Activated B cell treated with CpG ODN at 0.5 μM for 24 hours (primary cell): ENCODE measurements at regions of chr21 and their contacts with region 1.

Region 1: DNA sequence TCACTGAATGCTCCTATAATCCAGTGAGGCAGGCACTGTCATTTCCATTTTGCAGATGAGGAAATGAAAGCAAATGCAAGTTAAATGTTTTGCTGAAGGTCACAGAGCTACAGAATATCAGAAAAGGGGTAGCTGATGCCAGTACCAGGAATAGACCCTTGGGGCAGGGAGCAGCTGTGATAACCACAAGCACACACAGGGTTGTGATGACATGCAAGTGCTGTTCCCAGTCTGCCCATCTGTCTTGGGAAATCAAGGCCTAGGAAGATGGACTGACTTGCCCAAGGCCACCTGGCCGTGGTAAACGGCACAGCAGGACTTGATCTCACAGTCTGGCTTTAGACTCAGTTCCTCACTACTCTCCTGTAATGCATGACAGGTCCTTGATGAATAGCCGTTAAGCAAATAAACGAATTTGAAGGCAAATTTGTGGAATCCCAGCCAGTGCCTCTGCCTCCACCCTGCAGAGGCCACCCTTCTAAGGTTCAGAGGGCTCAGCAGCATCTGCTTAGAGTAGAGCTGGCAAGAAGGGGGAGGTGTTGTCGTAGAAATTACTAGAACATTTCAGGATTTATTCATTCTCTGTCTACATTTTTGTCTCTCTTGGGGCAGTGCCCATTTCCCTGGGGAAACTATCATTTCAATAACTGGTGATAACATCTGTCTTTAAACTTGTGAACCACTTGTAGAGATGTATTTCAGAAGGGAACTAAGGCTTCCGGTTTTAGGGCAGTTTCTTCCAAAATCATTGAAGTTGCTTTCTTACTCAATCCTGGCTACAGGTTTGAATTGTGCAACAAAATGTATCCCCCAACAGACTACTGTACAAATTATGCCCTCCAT is 53.2 kb upstream of the MRPS6 start:
- DNase-seq: peak; percentile 45
- ATAC-seq: peak; percentile 69
- H3K4me3 Mint-ChIP-seq: peak overlapping the region; percentile 75
- H3K27ac Mint-ChIP-seq: peak overlapping the region; percentile 96
- H3K4me1 Mint-ChIP-seq: no peaks in the 10 kb centered on the region
- H3K27me3 Mint-ChIP-seq: no peaks in the 10 kb centered on the region
- CTCF ChIP-seq: no peak

Region 2: GRCh38 chr21:33901412-33902288 is 118.6 kb before region 1 on chr21:
- CTCF ChIA-PET with region 1: no interaction called
- POLR2A ChIA-PET with region 1: no interaction called
- intact Hi-C with region 1: no loop called
- DNase-seq: no peak
- ATAC-seq: peak; percentile 14
- H3K4me3 Mint-ChIP-seq: no peak overlapping the region
- H3K27ac Mint-ChIP-seq: no peak overlapping the region
- H3K4me1 Mint-ChIP-seq: peaks cover 4% of the 10 kb centered on the region
- H3K27me3 Mint-ChIP-seq: no peaks in the 10 kb centered on the region
- CTCF ChIP-seq: no peak

Region 3: DNA sequence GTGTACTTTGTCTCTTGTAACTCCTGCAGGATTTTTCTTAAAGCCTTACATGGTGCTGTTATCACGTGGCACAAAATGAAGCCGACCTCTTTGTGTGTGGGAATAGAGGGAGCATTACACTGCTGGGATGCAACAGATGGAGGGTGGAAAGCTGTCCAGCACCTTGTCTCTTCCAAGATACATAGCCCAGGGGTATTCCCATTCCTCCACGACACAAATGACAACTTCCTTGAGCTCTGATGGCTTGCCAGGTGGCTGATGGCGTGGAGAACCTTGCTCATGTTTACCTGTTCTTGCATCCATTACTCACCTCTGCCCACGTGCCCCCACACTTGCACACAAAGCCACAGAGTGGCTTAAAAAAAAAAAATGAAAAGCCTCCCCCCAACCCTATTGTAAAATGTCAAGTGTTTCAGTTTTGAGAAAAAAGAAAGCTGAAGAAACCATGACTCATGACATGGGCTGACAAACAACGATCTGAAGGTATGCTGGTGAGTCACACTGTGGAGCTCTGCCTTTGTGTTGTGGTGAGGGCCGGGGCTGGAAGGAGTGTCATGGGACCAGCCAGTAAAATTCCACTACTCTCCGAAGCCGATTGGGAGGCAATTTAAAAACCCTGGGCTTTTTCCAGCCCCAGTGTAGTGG is 72.7 kb before region 1 on chr21:
- CTCF ChIA-PET with region 1: no interaction called
- POLR2A ChIA-PET with region 1: interaction called, 17 read pairs
- intact Hi-C with region 1: loop called (anchors 1 kb)
- DNase-seq: peak; percentile 36
- ATAC-seq: peak; percentile 74
- H3K4me3 Mint-ChIP-seq: peak overlapping the region; percentile 75
- H3K27ac Mint-ChIP-seq: peak overlapping the region; percentile 92
- H3K4me1 Mint-ChIP-seq: peaks cover 55% of the 10 kb centered on the region
- H3K27me3 Mint-ChIP-seq: no peaks in the 10 kb centered on the region
- CTCF ChIP-seq: no peak

Region 4: GRCh38 chr21:33976082-33977016 is 43.9 kb before region 1 on chr21:
- CTCF ChIA-PET with region 1: interaction called, 4 read pairs
- POLR2A ChIA-PET with region 1: interaction called, 6 read pairs
- intact Hi-C with region 1: loop called (anchors 2 kb)
- DNase-seq: no peak
- ATAC-seq: peak; percentile 49
- H3K4me3 Mint-ChIP-seq: peak overlapping the region; percentile 66
- H3K27ac Mint-ChIP-seq: peak overlapping the region; percentile 90
- H3K4me1 Mint-ChIP-seq: peaks cover 36% of the 10 kb centered on the region
- H3K27me3 Mint-ChIP-seq: no peaks in the 10 kb centered on the region
- CTCF ChIP-seq: no peak

Region 5: DNA sequence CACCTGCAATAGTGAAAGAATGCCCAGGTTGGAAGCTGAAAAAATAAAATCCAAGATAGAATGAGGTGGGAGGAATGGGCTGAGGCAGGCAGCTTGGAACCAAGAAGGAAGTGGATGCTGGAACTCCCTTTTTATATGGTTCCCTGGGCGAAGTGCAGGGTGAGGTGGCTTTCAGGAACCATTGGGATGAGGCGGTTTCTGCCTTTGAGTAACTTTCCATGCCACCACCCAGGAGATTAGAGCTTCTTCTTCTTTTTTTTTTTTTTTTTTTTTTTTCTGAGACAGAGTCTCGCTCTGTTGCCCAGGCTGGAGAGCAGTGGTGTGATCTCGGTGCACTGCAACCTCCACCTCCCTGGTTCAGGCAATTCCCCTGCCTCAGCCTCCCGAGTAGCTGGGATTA is 35.4 kb after region 1 on chr21:
- CTCF ChIA-PET with region 1: interaction called, 3 read pairs
- POLR2A ChIA-PET with region 1: interaction called, 3 read pairs
- intact Hi-C with region 1: loop called (anchors 5 kb)
- DNase-seq: no peak
- ATAC-seq: peak; percentile 45
- H3K4me3 Mint-ChIP-seq: no peak overlapping the region
- H3K27ac Mint-ChIP-seq: no peak overlapping the region
- H3K4me1 Mint-ChIP-seq: peaks cover 8% of the 10 kb centered on the region
- H3K27me3 Mint-ChIP-seq: no peaks in the 10 kb centered on the region
- CTCF ChIP-seq: no peak

Region 6: DNA sequence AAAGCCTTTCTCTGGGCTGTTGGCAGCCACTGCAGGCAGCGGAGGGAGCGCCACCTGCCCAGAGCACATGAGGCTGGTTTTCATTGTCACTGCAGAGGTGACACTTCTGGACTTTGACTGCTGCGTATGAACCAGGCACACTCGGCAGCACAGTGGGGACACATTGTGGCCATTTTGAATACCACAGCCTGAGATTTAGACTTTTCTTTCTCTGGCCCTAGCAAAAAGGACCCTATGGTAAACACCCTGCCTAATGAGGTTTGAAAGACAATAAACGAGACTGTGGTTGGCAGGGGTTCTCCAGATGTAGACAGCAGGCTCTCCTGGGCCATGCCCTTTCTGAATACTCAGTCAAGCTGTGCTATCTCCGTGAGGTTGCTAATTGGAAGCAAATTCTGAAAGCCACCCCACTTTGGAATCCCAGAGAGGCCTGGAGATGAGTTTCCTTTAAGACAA is 331.6 kb after region 1 on chr21:
- CTCF ChIA-PET with region 1: interaction called, 16 read pairs
- POLR2A ChIA-PET with region 1: no interaction called
- intact Hi-C with region 1: loop called (anchors 2 kb)
- DNase-seq: no peak
- ATAC-seq: peak; percentile 80
- H3K4me3 Mint-ChIP-seq: no peak overlapping the region
- H3K27ac Mint-ChIP-seq: no peak overlapping the region
- H3K4me1 Mint-ChIP-seq: peaks cover 3% of the 10 kb centered on the region
- H3K27me3 Mint-ChIP-seq: peaks cover 29% of the 10 kb centered on the region
- CTCF ChIP-seq: no peak

Region 7: DNA sequence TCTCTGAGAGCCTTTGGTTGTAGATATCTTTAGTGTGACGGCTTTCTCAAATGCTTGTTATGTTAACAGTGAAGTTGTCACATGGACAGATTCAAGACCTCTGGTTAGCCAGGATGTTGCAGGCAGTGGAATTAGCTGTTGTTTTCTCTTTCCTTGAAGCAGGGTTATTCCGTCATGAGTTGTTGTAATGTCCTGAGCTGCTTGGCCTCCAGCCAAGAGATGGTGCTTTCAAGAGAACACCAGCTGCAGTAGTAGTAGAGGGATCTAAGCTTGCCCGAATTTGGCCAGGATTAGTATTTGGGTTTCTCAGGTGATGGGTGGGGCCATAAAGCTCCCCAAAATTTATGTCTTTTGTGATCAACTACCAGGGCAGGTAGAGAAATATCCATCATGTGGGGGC is 478.4 kb after region 1 on chr21:
- CTCF ChIA-PET with region 1: no interaction called
- POLR2A ChIA-PET with region 1: no interaction called
- intact Hi-C with region 1: no loop called
- DNase-seq: no peak
- ATAC-seq: no peak
- H3K4me3 Mint-ChIP-seq: no peak overlapping the region
- H3K27ac Mint-ChIP-seq: no peak overlapping the region
- H3K4me1 Mint-ChIP-seq: no peaks in the 10 kb centered on the region
- H3K27me3 Mint-ChIP-seq: peaks cover 10% of the 10 kb centered on the region
- CTCF ChIP-seq: no peak

Region 8: GRCh38 chr21:34795175-34795547 is 774.9 kb after region 1 on chr21:
- CTCF ChIA-PET with region 1: no interaction called
- POLR2A ChIA-PET with region 1: no interaction called
- intact Hi-C with region 1: no loop called
- DNase-seq: no peak
- ATAC-seq: no peak
- H3K4me3 Mint-ChIP-seq: no peak overlapping the region
- H3K27ac Mint-ChIP-seq: no peak overlapping the region
- H3K4me1 Mint-ChIP-seq: no peaks in the 10 kb centered on the region
- H3K27me3 Mint-ChIP-seq: no peaks in the 10 kb centered on the region
- CTCF ChIP-seq: no peak